ENCODE measurements at regions of chr6 and their contacts with region 1.

Region 1: GRCh38 chr6:145749632-145750031 is 14.3 kb upstream of the EPM2A start:
- DNase-seq: no peak
- ATAC-seq: peak; percentile 68

Region 2: DNA sequence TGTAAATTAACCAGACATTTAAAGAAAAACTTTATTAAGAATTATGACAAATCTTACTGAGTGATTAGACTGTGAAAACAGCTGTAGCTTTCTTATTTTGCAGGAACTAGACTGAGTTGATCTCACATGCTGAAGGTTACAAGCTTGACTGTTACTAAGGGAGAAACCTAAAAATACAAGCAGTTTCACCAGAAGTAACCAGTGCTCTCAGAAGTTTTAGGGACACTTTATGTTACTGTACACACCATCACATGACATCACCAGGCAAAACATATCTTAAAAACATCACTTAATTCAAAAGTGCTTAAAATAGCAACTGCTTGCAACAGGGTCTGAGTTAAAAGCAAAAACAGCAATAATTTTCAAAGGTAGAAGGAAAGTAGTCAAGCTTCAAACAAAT is 59.6 kb after region 1 on chr6:
- intact Hi-C with region 1: loop called in 1 of 2 experiments (anchors 10 kb)
- DNase-seq: no peak
- ATAC-seq: no peak

Measured in left colon (tissue), 2 donors.